ENCODE measurements at regions of chr18 and their contacts with region 1.

Region 1: GRCh38 chr18:5969989-5970403 is 74.7 kb upstream of the TMEM200C start:
- DNase-seq: no peak
- ATAC-seq: no peak
- H3K4me3 ChIP-seq: no peak overlapping the region
- H3K27ac ChIP-seq: no peak overlapping the region
- H3K4me1 ChIP-seq: no peaks in the 10 kb centered on the region
- H3K27me3 ChIP-seq: no peaks in the 10 kb centered on the region
- CTCF ChIP-seq: no peak

Region 2: GRCh38 chr18:5673576-5673975 is 296.4 kb before region 1 on chr18:
- intact Hi-C with region 1: no loop called
- DNase-seq: no peak
- ATAC-seq: no peak
- H3K4me3 ChIP-seq: no peak overlapping the region
- H3K27ac ChIP-seq: no peak overlapping the region
- H3K4me1 ChIP-seq: no peaks in the 10 kb centered on the region
- H3K27me3 ChIP-seq: no peaks in the 10 kb centered on the region
- CTCF ChIP-seq: no peak

Region 3: GRCh38 chr18:5900249-5900648 is 69.7 kb before region 1 on chr18:
- intact Hi-C with region 1: loop called in 1 of 2 experiments (anchors 10 kb)
- DNase-seq: no peak
- ATAC-seq: no peak
- H3K4me3 ChIP-seq: no peak overlapping the region
- H3K27ac ChIP-seq: no peak overlapping the region
- H3K4me1 ChIP-seq: no peaks in the 10 kb centered on the region
- H3K27me3 ChIP-seq: peaks cover 3 to 50% (median 9%) of the 10 kb centered on the region in 3 donors
- CTCF ChIP-seq: no peak

Region 4: DNA sequence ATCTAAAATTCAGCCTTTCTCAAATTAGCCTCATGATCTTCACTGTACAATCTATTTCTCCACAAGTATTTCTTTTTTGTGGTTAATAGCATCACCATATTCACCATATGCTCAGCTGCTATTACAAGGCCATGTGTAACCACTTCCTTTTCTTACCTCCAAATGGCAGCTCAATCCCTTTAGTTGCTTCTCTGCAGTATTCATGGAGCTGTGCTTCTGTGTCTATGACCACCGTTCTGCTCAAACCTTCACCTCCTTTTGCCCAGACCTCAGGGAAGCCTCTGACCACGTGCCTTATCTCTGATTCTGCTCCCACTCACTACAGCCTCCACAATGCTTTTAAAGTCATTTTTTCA is 52.1 kb after region 1 on chr18:
- intact Hi-C with region 1: no loop called
- DNase-seq: no peak
- ATAC-seq: no peak
- H3K4me3 ChIP-seq: no peak overlapping the region
- H3K27ac ChIP-seq: no peak overlapping the region
- H3K4me1 ChIP-seq: no peaks in the 10 kb centered on the region
- H3K27me3 ChIP-seq: no peaks in the 10 kb centered on the region
- CTCF ChIP-seq: no peak

Region 5: DNA sequence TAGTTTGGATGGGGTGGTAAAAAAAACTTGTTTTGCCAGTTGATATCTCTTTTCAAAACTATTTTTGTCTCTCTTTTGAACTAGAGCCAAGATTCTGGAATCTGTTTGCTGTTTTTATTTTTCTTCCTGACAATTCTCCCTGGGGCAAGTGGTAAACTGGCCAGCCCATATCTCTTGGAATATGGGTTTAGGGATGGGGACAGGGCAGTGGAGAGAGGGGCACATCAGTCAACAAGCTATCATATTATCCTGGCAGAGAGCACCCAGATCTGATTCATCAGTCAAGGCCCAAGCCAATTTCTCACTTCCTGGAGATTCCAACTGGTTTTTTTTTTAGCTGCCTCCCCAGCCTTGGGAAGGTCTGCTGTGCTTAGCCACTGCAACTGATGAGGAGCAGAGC is 811.8 kb after region 1 on chr18:
- intact Hi-C with region 1: no loop called
- DNase-seq: no peak
- ATAC-seq: peak; percentile 86 to 97 (median 94)
- H3K4me3 ChIP-seq: no peak overlapping the region
- H3K27ac ChIP-seq: peak overlapping the region; percentile 77
- H3K4me1 ChIP-seq: peaks cover 14% of the 10 kb centered on the region
- H3K27me3 ChIP-seq: no peaks in the 10 kb centered on the region
- CTCF ChIP-seq: no peak